HepG2 (cell line): ENCODE measurements at regions of chr7 and their contacts with region 1.

Region 1: GRCh38 chr7:48154792-48155413 is 16.4 kb upstream of the ABCA13 start:
- DNase-seq: peak; percentile 73
- ATAC-seq: peak; percentile 98
- H3K4me3 ChIP-seq: peak overlapping the region in 2 of 3 experiments; percentile 26 to 44; a peak in 2 of 6 replicates
- H3K27ac ChIP-seq: no peak overlapping the region
- H3K4me1 ChIP-seq: peaks cover 19% of the 10 kb centered on the region
- H3K27me3 ChIP-seq: 0 out of 5 replicates have a peak, but pooled peaks cover 0 to 8% of the 10 kb centered on the region in 2 experiments
- CTCF ChIP-seq: peak; percentile 90
- EP300 ChIP-seq: no peak
- POLR2A ChIP-seq: no peak
- RAD21 ChIP-seq: peak; percentile 92

Region 2: GRCh38 chr7:47945261-47946001 is 209.5 kb before region 1 on chr7:
- CTCF ChIA-PET with region 1: no interaction called
- POLR2A ChIA-PET with region 1: no interaction called
- in situ Hi-C with region 1: no loop called
- intact Hi-C with region 1: loop called (anchors 1 kb)
- DNase-seq: peak; percentile 57
- ATAC-seq: peak; percentile 61; the same call in 2 of the 3 replicates
- H3K4me3 ChIP-seq: no peak overlapping the region
- H3K27ac ChIP-seq: no peak overlapping the region
- H3K4me1 ChIP-seq: peaks cover 29% of the 10 kb centered on the region
- H3K27me3 ChIP-seq: peaks cover 2 to 7% of the 10 kb centered on the region in 2 experiments; a peak in 2 of 5 replicates
- CTCF ChIP-seq: peak; percentile 79
- EP300 ChIP-seq: no peak
- POLR2A ChIP-seq: no peak
- RAD21 ChIP-seq: peak; percentile 60; the same call in 1 of the 2 replicates

Region 3: DNA sequence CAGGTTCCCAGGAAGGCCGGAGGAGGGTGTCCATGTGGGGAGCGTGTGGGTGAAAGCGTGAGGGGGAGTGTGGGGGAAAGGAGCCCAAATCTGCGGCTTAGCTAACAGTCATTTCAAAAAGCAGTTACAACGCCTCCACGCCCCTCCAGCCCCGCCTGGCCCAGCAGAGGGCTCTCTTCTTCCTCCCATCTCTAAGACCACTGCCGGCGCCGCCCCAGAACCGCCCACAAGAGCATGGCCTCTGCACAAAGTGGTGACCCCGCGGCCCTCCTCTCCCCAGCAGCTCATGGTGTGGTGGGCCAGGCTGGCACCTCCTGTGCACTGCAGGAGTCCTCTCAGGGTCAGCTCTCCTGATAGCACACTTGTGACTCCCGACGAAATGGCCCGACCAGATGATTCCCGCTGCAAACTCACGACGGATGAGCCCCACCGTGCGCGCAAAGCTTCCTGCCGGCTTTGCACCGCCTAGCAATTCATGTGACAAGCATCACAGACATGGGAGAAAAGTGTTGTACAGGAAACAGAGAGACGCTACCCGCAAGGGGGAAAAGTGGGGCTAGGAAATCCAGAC is 163.1 kb before region 1 on chr7:
- CTCF ChIA-PET with region 1: interaction called, 6 read pairs
- POLR2A ChIA-PET with region 1: no interaction called
- in situ Hi-C with region 1: no loop called
- intact Hi-C with region 1: loop called (anchors 2 kb)
- DNase-seq: peak; percentile 63
- ATAC-seq: peak; percentile 99
- H3K4me3 ChIP-seq: peak overlapping the region; percentile 41 to 72 (median 42)
- H3K27ac ChIP-seq: no peak overlapping the region
- H3K4me1 ChIP-seq: peaks cover 40% of the 10 kb centered on the region
- H3K27me3 ChIP-seq: no peaks in the 10 kb centered on the region
- CTCF ChIP-seq: peak; percentile 88
- EP300 ChIP-seq: no peak
- POLR2A ChIP-seq: no peak
- RAD21 ChIP-seq: peak; percentile 79

Region 4: GRCh38 chr7:48088559-48089045 is 66.3 kb before region 1 on chr7:
- CTCF ChIA-PET with region 1: no interaction called
- POLR2A ChIA-PET with region 1: interaction called, 7 read pairs
- in situ Hi-C with region 1: no loop called
- intact Hi-C with region 1: loop called (anchors 2 kb)
- DNase-seq: peak; percentile 97
- ATAC-seq: peak; percentile 89
- H3K4me3 ChIP-seq: peak overlapping the region; percentile 52 to 87 (median 86)
- H3K27ac ChIP-seq: peak overlapping the region; percentile 90
- H3K4me1 ChIP-seq: peaks cover 53% of the 10 kb centered on the region
- H3K27me3 ChIP-seq: no peaks in the 10 kb centered on the region
- CTCF ChIP-seq: no peak
- EP300 ChIP-seq: peak in 1 of 2 experiments; percentile 47; a peak in 1 of 4 replicates
- POLR2A ChIP-seq: peak; percentile 75 to 86
- RAD21 ChIP-seq: 0 out of 2 replicates have a peak, but pooled peaks have one; percentile 29

Region 5: GRCh38 chr7:48109848-48110663 is 44.8 kb before region 1 on chr7:
- CTCF ChIA-PET with region 1: interaction called, 21 read pairs
- POLR2A ChIA-PET with region 1: interaction called, 4 read pairs
- in situ Hi-C with region 1: no loop called
- intact Hi-C with region 1: loop called (anchors 1 kb)
- DNase-seq: peak; percentile 56
- ATAC-seq: peak; percentile 86
- H3K4me3 ChIP-seq: no peak overlapping the region
- H3K27ac ChIP-seq: no peak overlapping the region
- H3K4me1 ChIP-seq: peaks cover 20% of the 10 kb centered on the region
- H3K27me3 ChIP-seq: no peaks in the 10 kb centered on the region
- CTCF ChIP-seq: peak; percentile 97
- EP300 ChIP-seq: no peak
- POLR2A ChIP-seq: no peak
- RAD21 ChIP-seq: peak; percentile 93

Region 6: GRCh38 chr7:48139459-48139858 is 15.4 kb before region 1 on chr7:
- CTCF ChIA-PET with region 1: interaction called, 62 read pairs
- POLR2A ChIA-PET with region 1: interaction called, 57 read pairs
- in situ Hi-C with region 1: no loop called
- intact Hi-C with region 1: loop called (anchors 1 kb)
- DNase-seq: peak; percentile 72
- ATAC-seq: peak; percentile 51
- H3K4me3 ChIP-seq: peak overlapping the region; percentile 47 to 63 (median 55)
- H3K27ac ChIP-seq: peak overlapping the region; percentile 90
- H3K4me1 ChIP-seq: peaks cover 63% of the 10 kb centered on the region
- H3K27me3 ChIP-seq: no peaks in the 10 kb centered on the region
- CTCF ChIP-seq: peak; percentile 76
- EP300 ChIP-seq: no peak
- POLR2A ChIP-seq: no peak
- RAD21 ChIP-seq: peak; percentile 49

Region 7: GRCh38 chr7:48237354-48237753 is 82.5 kb after region 1 on chr7:
- CTCF ChIA-PET with region 1: no interaction called
- POLR2A ChIA-PET with region 1: no interaction called
- in situ Hi-C with region 1: no loop called
- intact Hi-C with region 1: no loop called
- DNase-seq: no peak
- ATAC-seq: no peak
- H3K4me3 ChIP-seq: no peak overlapping the region
- H3K27ac ChIP-seq: no peak overlapping the region
- H3K4me1 ChIP-seq: no peaks in the 10 kb centered on the region
- H3K27me3 ChIP-seq: peaks cover 0 to 4% of the 10 kb centered on the region in 2 experiments; a peak in 1 of 5 replicates
- CTCF ChIP-seq: no peak
- EP300 ChIP-seq: no peak
- POLR2A ChIP-seq: no peak
- RAD21 ChIP-seq: no peak